MCF 10A (cell line): ENCODE measurements at regions of chr15 and their contacts with region 1.

Region 1: DNA sequence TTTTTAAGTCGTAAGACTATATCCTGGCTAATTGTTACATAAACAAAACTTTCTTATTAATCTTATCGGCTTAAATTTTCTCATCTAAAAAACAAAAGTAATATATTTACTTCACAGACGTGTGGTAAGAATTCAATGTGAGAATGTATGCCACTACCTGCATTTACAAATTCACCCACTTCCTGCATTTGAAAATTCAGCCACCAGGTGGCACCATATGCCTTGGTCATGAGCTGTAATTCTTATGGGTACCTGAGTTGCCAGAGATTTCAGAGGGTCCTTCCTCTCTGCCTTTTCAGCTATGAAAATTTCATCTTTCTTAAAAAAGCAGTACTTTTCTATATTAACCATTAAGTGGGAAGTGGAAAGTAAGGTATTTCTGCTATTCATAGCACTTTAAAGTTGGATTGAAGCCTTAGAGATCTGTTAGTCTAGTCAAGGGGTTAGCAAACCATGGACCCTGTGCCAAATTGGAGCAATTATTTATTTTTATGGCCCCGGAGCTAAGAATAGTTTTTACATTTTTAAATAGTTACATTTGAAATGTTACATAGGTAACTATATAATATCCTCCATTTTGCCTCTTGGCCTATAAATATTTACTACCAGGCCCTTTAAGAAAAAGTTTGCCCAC is 127.8 kb downstream of the HCN4 start:
- DNase-seq: peak; percentile 71
- H3K4me3 Mint-ChIP-seq: no peak overlapping the region
- H3K27ac Mint-ChIP-seq: no peak overlapping the region
- H3K4me1 Mint-ChIP-seq: no peaks in the 10 kb centered on the region
- H3K27me3 Mint-ChIP-seq: no peaks in the 10 kb centered on the region
- CTCF ChIP-seq: peak; percentile 72

Region 2: GRCh38 chr15:72783563-72784237 is 457.3 kb before region 1 on chr15 and contains the start of gene ADPGK:
- CTCF ChIA-PET with region 1: no interaction called
- POLR2A ChIA-PET with region 1: no interaction called
- intact Hi-C with region 1: loop called (anchors 5 kb)
- DNase-seq: peak; percentile 93
- H3K4me3 Mint-ChIP-seq: peak within 1 kb of the TSS; percentile 81
- H3K27ac Mint-ChIP-seq: peak within 1 kb of the TSS; percentile 61
- H3K4me1 Mint-ChIP-seq: peaks cover 22% of the 10 kb centered on the region
- H3K27me3 Mint-ChIP-seq: no peaks in the 10 kb centered on the region
- CTCF ChIP-seq: no peak
- total RNA-seq, gene ADPGK: 41.6 and 53.7 TPM in 2 replicates

Region 3: GRCh38 chr15:73127301-73127936 is 113.6 kb before region 1 on chr15:
- CTCF ChIA-PET with region 1: no interaction called
- POLR2A ChIA-PET with region 1: no interaction called
- intact Hi-C with region 1: loop called (anchors 5 kb)
- DNase-seq: peak; percentile 56
- H3K4me3 Mint-ChIP-seq: no peak overlapping the region
- H3K27ac Mint-ChIP-seq: no peak overlapping the region
- H3K4me1 Mint-ChIP-seq: no peaks in the 10 kb centered on the region
- H3K27me3 Mint-ChIP-seq: no peaks in the 10 kb centered on the region
- CTCF ChIP-seq: peak; percentile 68

Region 4: GRCh38 chr15:73265536-73266153 is 24.7 kb after region 1 on chr15:
- CTCF ChIA-PET with region 1: interaction called, 16 read pairs
- POLR2A ChIA-PET with region 1: no interaction called
- intact Hi-C with region 1: loop called (anchors 1 kb)
- DNase-seq: peak; percentile 67
- H3K4me3 Mint-ChIP-seq: no peak overlapping the region
- H3K27ac Mint-ChIP-seq: no peak overlapping the region
- H3K4me1 Mint-ChIP-seq: no peaks in the 10 kb centered on the region
- H3K27me3 Mint-ChIP-seq: no peaks in the 10 kb centered on the region
- CTCF ChIP-seq: peak; percentile 61